MCF 10A (cell line): ENCODE measurements at regions of chr1 and their contacts with region 1.

Region 1: DNA sequence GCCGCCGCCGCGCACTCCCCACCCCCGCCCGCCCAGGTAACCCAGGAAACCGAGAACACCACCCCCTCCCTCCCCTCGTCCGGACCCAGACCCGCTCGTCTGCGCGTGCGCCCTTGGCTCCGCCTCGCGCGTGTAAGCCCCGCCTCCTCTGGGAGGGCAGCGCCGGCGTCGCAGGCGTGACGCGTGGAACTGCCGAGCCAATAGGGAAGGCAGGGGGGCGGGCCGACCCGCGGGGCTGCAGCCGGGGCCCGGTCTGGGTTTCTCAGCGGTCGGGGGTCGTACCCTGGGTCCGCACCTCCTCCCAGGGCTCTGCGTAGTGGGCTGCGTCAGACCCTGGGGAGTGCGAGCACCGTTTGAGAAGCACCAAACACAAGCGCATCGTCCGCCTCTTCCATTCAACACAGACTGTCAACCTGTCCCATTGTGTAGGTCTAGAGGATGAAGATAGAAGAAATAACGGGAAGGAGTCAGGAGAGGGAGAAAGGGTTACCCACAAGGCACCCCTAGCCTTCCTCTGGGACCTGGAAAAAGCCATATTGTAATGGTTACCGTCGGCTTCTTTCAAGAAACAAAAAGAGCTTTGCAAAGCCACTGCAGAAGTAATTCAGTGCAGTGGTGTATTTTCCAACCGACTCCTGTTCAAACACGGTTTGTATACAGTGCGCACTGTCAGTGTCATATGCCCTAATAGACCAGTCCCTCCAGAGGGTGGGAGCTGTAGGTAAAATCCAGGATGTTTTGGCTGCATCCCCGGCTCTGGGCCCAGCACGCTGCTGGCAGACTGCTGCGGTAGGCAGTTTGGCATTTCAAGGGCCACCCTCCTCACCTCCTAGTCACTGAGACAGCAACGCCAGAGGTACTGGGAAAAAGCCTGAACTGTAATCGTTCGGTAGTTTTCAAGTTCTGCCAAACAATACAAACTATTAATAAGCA is 473 bp upstream of the LYST start:
- DNase-seq: peak; percentile 99
- H3K4me3 Mint-ChIP-seq: peak overlapping the region; percentile 99
- H3K27ac Mint-ChIP-seq: peak overlapping the region; percentile 95
- H3K4me1 Mint-ChIP-seq: peaks cover 35% of the 10 kb centered on the region
- H3K27me3 Mint-ChIP-seq: no peaks in the 10 kb centered on the region
- CTCF ChIP-seq: no peak

Region 2: GRCh38 chr1:235831148-235831547 is 36.0 kb before region 1 on chr1:
- CTCF ChIA-PET with region 1: interaction called, 10 read pairs
- POLR2A ChIA-PET with region 1: interaction called, 4 read pairs
- intact Hi-C with region 1: no loop called
- DNase-seq: peak; percentile 40
- H3K4me3 Mint-ChIP-seq: no peak overlapping the region
- H3K27ac Mint-ChIP-seq: no peak overlapping the region
- H3K4me1 Mint-ChIP-seq: peaks cover 6% of the 10 kb centered on the region
- H3K27me3 Mint-ChIP-seq: no peaks in the 10 kb centered on the region
- CTCF ChIP-seq: no peak

Region 3: GRCh38 chr1:235878082-235878811 is 11.1 kb after region 1 on chr1:
- CTCF ChIA-PET with region 1: interaction called, 14 read pairs
- POLR2A ChIA-PET with region 1: interaction called, 60 read pairs
- intact Hi-C with region 1: no loop called
- DNase-seq: no peak
- H3K4me3 Mint-ChIP-seq: no peak overlapping the region
- H3K27ac Mint-ChIP-seq: no peak overlapping the region
- H3K4me1 Mint-ChIP-seq: peaks cover 24% of the 10 kb centered on the region
- H3K27me3 Mint-ChIP-seq: no peaks in the 10 kb centered on the region
- CTCF ChIP-seq: no peak

Region 4: DNA sequence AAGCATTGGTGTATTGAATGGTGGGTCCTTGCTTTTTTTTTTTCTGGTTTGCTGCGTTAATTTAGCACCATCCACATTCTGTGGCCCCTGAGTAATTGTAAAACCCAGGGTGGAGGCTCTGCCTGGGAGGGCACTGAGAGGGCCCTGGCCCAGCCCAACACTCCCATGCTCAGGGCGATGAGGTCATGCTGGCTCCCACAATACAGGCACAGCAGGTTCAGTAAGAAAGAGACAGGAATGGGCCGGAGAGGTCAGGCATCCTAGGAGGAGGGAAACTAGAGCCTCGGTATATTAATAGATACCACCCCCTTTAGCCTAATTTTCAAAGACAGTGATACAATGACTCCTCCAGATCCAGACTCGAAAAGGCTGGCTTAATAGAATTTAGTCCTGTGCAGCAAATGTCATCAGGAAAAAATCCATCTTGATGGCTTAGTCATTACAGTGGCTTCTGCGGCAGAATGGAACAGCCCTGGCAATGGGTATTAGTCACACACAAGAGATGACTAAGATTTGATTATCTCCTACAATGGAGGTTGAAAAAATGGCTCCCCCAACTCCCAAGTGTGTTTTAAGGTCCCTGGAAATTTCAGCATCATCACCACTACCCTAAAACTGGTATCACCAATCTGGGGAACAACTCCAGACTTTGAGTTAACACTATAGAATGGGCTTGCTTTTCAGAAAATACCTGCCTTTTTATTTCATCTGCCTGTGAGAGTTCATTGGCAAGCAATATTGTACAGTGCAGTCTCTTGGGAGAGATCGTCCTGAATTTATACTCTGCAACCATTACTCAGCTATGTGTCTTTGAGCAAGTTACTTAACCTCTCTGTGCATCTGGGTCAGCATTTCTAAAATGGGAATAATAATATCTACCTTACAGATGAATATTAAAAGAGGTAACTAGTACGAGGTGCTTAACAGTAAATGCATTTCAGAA is 43.4 kb after region 1 on chr1:
- CTCF ChIA-PET with region 1: interaction called, 65 read pairs
- POLR2A ChIA-PET with region 1: interaction called, 166 read pairs
- intact Hi-C with region 1: loop called (anchors 1 kb)
- DNase-seq: peak; percentile 97
- H3K4me3 Mint-ChIP-seq: peak overlapping the region; percentile 22
- H3K27ac Mint-ChIP-seq: peak overlapping the region; percentile 99
- H3K4me1 Mint-ChIP-seq: peaks cover 55% of the 10 kb centered on the region
- H3K27me3 Mint-ChIP-seq: no peaks in the 10 kb centered on the region
- CTCF ChIP-seq: no peak

Region 5: DNA sequence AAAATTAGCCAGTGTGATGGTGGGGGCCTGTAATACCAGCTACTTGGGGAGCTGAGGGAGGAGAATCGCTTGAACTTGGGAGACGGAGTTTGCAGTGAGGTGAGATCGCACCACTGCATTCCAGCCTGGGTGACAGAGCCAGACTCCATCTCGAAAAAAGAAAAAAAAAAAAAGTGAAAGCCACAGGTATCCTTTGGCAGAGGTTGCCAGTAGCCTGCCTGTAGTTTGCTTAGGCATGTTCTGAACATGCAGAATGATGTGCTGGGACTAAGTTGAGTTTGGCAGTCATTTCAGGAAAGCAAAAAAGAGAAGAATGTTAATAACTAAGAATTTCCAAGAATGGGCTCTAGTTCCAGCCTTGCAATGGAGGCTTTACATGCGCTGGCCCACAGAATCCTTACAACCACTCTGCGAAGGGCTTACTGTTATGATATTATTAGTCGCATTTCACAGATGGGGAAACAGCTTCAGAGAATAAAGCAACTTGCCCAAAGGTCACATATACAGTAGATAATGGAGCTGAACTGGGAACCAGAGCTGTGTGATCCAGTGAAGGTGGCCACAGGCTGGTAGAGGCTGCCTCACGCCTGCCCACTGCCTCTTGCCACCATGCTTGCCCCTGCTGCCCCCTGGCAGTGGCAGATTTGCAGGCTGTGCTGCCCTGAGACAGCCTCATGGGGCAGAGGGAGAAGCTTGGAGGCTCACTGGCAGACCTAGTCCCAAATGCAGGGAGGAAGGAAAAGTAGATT is 66.0 kb after region 1 on chr1:
- CTCF ChIA-PET with region 1: interaction called, 47 read pairs
- POLR2A ChIA-PET with region 1: interaction called, 102 read pairs
- intact Hi-C with region 1: no loop called
- DNase-seq: peak; percentile 67
- H3K4me3 Mint-ChIP-seq: peak overlapping the region; percentile 18
- H3K27ac Mint-ChIP-seq: peak overlapping the region; percentile 52
- H3K4me1 Mint-ChIP-seq: peaks cover 51% of the 10 kb centered on the region
- H3K27me3 Mint-ChIP-seq: no peaks in the 10 kb centered on the region
- CTCF ChIP-seq: no peak

Region 6: GRCh38 chr1:235954306-235955283 is 87.4 kb after region 1 on chr1:
- CTCF ChIA-PET with region 1: interaction called, 43 read pairs
- POLR2A ChIA-PET with region 1: interaction called, 26 read pairs
- intact Hi-C with region 1: no loop called
- DNase-seq: no peak
- H3K4me3 Mint-ChIP-seq: no peak overlapping the region
- H3K27ac Mint-ChIP-seq: peak overlapping the region; percentile 28
- H3K4me1 Mint-ChIP-seq: peaks cover 9% of the 10 kb centered on the region
- H3K27me3 Mint-ChIP-seq: no peaks in the 10 kb centered on the region
- CTCF ChIP-seq: no peak